AG04450 (cell line): ENCODE measurements at regions of chr1 and their contacts with region 1.

Region 1: GRCh38 chr1:187275985-187276575 is 447.3 kb downstream of the PLA2G4A start:
- DNase-seq: no peak
- H3K4me3 ChIP-seq: no peak overlapping the region
- H3K27ac ChIP-seq: no peak overlapping the region
- H3K27me3 ChIP-seq: no peaks in the 10 kb centered on the region
- CTCF ChIP-seq: no peak

Region 2: DNA sequence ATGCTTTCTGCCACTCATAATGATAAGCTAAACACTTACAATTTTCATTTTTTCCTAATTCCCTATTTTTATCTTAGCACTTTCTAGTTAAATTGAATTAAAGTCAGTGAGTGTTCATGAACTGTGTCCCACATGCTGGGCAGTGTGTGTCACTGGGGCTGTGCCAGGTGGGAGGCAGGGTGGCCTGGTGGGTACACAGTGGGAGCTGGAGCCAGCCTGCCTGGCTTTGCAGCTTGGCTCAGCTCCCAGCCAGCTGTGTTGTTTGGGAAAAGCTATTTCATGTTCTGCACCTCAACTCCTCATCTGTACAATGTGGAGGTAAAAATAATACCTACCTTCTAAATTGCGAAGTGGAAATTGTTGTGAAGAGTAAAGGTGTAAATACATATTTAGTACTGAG is 208.9 kb before region 1 on chr1:
- CTCF ChIA-PET with region 1: no interaction called
- POLR2A ChIA-PET with region 1: no interaction called
- DNase-seq: no peak
- H3K4me3 ChIP-seq: no peak overlapping the region
- H3K27ac ChIP-seq: no peak overlapping the region
- H3K27me3 ChIP-seq: no peaks in the 10 kb centered on the region
- CTCF ChIP-seq: no peak

Region 3: DNA sequence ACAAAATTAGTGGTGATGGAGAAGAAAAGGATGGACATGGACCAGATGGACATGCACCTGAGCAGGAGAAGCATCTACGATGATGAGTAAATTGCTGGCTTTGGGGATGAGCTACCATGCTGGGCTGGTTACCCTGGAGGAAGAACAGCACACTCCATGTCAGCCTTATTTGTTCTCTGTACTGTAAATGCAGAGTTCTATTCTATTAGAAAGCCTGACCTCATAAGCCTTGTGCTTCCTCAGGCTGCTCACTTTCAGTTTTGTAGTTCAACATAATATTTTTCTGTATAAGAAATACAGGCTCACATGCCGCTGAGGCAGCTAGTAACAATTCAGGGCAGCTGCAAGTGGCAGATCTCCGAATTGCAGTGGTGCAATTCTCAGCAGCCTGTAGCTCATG is 197.8 kb before region 1 on chr1:
- CTCF ChIA-PET with region 1: no interaction called
- POLR2A ChIA-PET with region 1: no interaction called
- DNase-seq: no peak
- H3K4me3 ChIP-seq: no peak overlapping the region
- H3K27ac ChIP-seq: no peak overlapping the region
- H3K27me3 ChIP-seq: no peaks in the 10 kb centered on the region
- CTCF ChIP-seq: no peak

Region 4: DNA sequence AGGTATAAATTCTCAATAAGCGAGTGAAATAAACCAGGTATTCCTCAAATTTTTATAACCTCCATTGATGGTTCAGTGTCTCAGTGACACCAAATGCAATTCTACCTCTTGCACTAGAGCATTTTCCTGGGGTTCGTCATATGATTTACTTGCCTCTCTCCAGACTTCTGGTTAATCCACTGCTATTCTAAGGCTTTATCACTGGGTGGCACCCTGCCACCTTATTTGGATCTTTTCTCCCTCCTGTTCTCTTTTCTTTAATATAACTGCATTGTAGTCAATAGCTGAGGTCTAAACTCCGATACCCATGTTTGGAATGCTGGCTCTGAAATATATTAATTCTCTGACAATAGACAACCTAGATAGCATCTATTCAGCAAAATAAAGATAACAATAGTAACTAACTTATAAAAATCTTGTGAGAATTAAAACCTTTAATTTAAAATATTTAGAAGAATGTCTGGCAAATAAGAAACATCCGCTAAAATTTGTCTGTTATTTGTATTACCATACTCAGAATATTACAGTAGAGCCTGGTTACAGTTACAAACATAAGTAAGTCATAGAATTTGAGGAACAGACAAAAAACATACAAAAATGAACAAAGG is 11.0 kb before region 1 on chr1:
- CTCF ChIA-PET with region 1: interaction called, 16 read pairs
- POLR2A ChIA-PET with region 1: no interaction called
- DNase-seq: peak; percentile 55
- H3K4me3 ChIP-seq: no peak overlapping the region
- H3K27ac ChIP-seq: no peak overlapping the region
- H3K27me3 ChIP-seq: no peaks in the 10 kb centered on the region
- CTCF ChIP-seq: peak; percentile 67

Region 5: GRCh38 chr1:187626056-187626455 is 350.0 kb after region 1 on chr1:
- CTCF ChIA-PET with region 1: no interaction called
- POLR2A ChIA-PET with region 1: no interaction called
- DNase-seq: no peak
- H3K4me3 ChIP-seq: no peak overlapping the region
- H3K27ac ChIP-seq: no peak overlapping the region
- H3K27me3 ChIP-seq: no peaks in the 10 kb centered on the region
- CTCF ChIP-seq: no peak